Endothelial cell of umbilical vein (primary cell): ENCODE measurements at regions of chr7 and their contacts with region 1.

Region 1: GRCh38 chr7:134986363-134987251 is at the start of gene AGBL3:
- DNase-seq: peak; percentile 95
- H3K4me3 ChIP-seq: peak within 1 kb of the TSS; percentile 73 to 99 (median 78)
- H3K27ac ChIP-seq: peak within 1 kb of the TSS; percentile 81
- H3K4me1 ChIP-seq: peaks cover 24% of the 10 kb centered on the region
- H3K27me3 ChIP-seq: no peaks in the 10 kb centered on the region
- CTCF ChIP-seq: peak; percentile 49 to 67
- POLR2A ChIP-seq: peak; percentile 74
- total RNA-seq, gene AGBL3: 3.2 and 3.4 TPM in 2 replicates

Region 2: DNA sequence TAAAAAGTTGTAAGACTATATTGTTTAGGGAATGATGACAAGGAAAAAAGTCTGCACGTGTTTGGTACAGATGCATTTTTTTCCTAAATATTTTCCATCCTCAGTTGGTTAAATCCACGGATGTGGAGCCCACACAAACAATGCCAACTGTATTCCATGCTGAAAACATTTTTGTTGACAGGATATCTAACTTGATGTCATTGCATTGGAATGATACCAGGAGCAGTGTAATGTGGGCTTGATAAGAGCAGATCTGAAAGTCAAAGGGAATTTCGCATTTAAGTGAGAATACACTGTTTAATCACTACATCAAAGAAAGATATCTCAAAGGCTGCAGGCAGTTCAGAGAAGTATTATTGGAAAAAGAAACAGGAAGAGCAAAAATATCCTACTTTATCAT is 111.8 kb after region 1 on chr7:
- CTCF ChIA-PET with region 1: no interaction called
- POLR2A ChIA-PET with region 1: no interaction called
- dilution Hi-C with region 1: no loop called
- intact Hi-C with region 1: loop called (anchors 5 kb)
- DNase-seq: peak; percentile 95
- H3K4me3 ChIP-seq: no peak overlapping the region
- H3K27ac ChIP-seq: peak overlapping the region; percentile 22
- H3K4me1 ChIP-seq: peaks cover 9% of the 10 kb centered on the region
- H3K27me3 ChIP-seq: no peaks in the 10 kb centered on the region
- CTCF ChIP-seq: no peak
- POLR2A ChIP-seq: no peak

Region 3: GRCh38 chr7:135147899-135148721 is 161.5 kb after region 1 on chr7 and contains the start of gene TMEM140:
- CTCF ChIA-PET with region 1: interaction called, 7 read pairs
- POLR2A ChIA-PET with region 1: no interaction called
- dilution Hi-C with region 1: no loop called
- intact Hi-C with region 1: loop called (anchors 2 kb)
- DNase-seq: peak; percentile 92
- H3K4me3 ChIP-seq: peak within 1 kb of the TSS; percentile 18 to 57 (median 46)
- H3K27ac ChIP-seq: peak within 1 kb of the TSS; percentile 81
- H3K4me1 ChIP-seq: peaks cover 52% of the 10 kb centered on the region
- H3K27me3 ChIP-seq: no peaks in the 10 kb centered on the region
- CTCF ChIP-seq: no peak
- POLR2A ChIP-seq: no peak
- total RNA-seq, gene TMEM140: 15.7 and 26.5 TPM in 2 replicates

Region 4: DNA sequence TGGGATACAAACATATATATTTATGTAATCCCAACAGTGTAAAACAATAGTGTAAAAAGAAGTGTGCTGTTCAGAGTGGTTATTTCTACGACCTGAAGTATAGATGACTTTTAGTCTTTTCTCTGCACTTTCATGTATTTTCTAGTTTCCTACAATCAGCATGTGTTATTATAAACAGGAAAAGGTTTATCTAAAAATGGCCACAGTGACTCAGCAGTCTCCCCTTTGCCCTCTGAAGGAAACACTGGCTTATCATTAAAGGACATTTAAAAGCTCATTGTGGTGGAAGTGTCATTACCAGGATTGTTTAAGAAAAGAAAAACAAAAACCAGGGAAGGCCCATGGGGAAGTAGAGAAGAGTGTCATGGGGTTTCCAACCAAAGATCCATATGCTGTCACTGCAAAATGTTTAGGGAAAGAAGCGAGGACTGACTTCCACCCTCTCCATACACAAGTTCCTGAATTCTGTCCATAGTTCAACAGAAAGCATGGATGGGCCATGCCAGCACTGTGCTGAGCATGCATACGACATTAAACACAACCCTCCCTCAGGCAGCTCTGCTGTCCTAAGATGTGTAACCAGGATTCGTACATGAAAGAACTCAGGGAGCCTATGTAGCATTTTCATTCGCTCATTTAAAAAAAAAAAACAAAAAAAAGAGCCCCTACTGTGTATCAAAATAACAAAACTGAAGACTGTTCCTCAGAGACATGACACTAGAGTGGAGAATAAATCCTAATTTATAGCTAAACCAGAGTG is 173.7 kb after region 1 on chr7:
- CTCF ChIA-PET with region 1: interaction called, 19 read pairs
- POLR2A ChIA-PET with region 1: no interaction called
- dilution Hi-C with region 1: no loop called
- intact Hi-C with region 1: loop called (anchors 2 kb)
- DNase-seq: peak; percentile 95
- H3K4me3 ChIP-seq: peak overlapping the region in 1 of 3 experiments; percentile 23
- H3K27ac ChIP-seq: peak overlapping the region; percentile 68
- H3K4me1 ChIP-seq: peaks cover 33% of the 10 kb centered on the region
- H3K27me3 ChIP-seq: no peaks in the 10 kb centered on the region
- CTCF ChIP-seq: no peak
- POLR2A ChIP-seq: peak; percentile 16

Region 5: GRCh38 chr7:135211179-135211945 is 224.8 kb after region 1 on chr7 and contains the start of gene WDR91:
- CTCF ChIA-PET with region 1: interaction called, 3 read pairs
- POLR2A ChIA-PET with region 1: no interaction called
- dilution Hi-C with region 1: no loop called
- intact Hi-C with region 1: loop called (anchors 2 kb)
- DNase-seq: peak; percentile 97
- H3K4me3 ChIP-seq: peak within 1 kb of the TSS; percentile 86 to 94 (median 91)
- H3K27ac ChIP-seq: peak within 1 kb of the TSS; percentile 93
- H3K4me1 ChIP-seq: peaks cover 8% of the 10 kb centered on the region
- H3K27me3 ChIP-seq: no peaks in the 10 kb centered on the region
- CTCF ChIP-seq: no peak
- POLR2A ChIP-seq: peak; percentile 77
- total RNA-seq, gene WDR91: 7.0 and 9.8 TPM in 2 replicates